AG04450 (cell line): ENCODE measurements at regions of chr22 and their contacts with region 1.

Region 1: GRCh38 chr22:20418211-20418788 is 19.3 kb downstream of the SCARF2 start:
- DNase-seq: peak; percentile 65
- H3K4me3 ChIP-seq: peak overlapping the region; percentile 56
- H3K27ac ChIP-seq: peak overlapping the region; percentile 57
- H3K27me3 ChIP-seq: no peaks in the 10 kb centered on the region
- CTCF ChIP-seq: peak; percentile 89

Region 2: DNA sequence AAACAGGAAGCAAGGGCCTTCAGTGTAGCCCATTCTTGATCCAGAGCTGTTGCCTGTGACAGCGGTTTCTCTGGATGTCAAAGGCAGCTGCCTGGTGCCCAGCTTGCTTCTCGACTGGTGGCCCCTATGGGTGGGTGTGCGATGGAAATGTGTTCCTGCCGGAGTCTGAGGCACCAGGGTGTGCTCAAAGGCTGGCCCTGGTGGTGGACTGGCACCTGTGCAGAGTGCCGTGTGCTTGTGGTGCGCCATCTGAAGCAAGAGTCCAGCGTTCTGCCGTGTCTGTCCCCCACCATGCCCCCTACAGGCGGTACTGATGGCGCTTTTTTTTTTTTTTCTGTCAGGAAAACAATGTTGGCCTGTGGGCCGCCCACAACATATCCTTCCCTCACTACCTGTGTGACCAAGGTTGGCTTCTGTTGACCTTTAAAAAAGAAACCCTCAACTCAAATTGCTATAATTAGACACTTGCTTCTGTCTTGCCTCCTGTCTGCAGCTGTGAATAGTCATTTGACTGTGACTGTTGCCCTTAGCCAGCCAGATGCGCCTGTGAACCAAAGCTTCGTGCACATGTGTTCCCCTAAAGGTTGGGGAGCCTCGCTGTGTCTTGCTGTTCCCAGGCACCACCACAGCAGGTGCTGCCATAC is 307.1 kb before region 1 on chr22:
- CTCF ChIA-PET with region 1: no interaction called
- POLR2A ChIA-PET with region 1: no interaction called
- DNase-seq: no peak
- H3K4me3 ChIP-seq: no peak overlapping the region
- H3K27ac ChIP-seq: no peak overlapping the region
- H3K27me3 ChIP-seq: no peaks in the 10 kb centered on the region
- CTCF ChIP-seq: peak; percentile 53

Region 3: GRCh38 chr22:20430720-20431510 is 12.6 kb after region 1 on chr22:
- CTCF ChIA-PET with region 1: interaction called, 35 read pairs
- POLR2A ChIA-PET with region 1: interaction called, 5 read pairs
- DNase-seq: no peak
- H3K4me3 ChIP-seq: no peak overlapping the region
- H3K27ac ChIP-seq: no peak overlapping the region
- H3K27me3 ChIP-seq: no peaks in the 10 kb centered on the region
- CTCF ChIP-seq: 0 out of 2 replicates have a peak, but pooled peaks have one; percentile 2

Region 4: GRCh38 chr22:20456064-20456721 is 37.9 kb after region 1 on chr22:
- CTCF ChIA-PET with region 1: interaction called, 155 read pairs
- POLR2A ChIA-PET with region 1: interaction called, 7 read pairs
- DNase-seq: peak; percentile 75
- H3K4me3 ChIP-seq: no peak overlapping the region
- H3K27ac ChIP-seq: no peak overlapping the region
- H3K27me3 ChIP-seq: no peaks in the 10 kb centered on the region
- CTCF ChIP-seq: peak; percentile 96

Region 5: DNA sequence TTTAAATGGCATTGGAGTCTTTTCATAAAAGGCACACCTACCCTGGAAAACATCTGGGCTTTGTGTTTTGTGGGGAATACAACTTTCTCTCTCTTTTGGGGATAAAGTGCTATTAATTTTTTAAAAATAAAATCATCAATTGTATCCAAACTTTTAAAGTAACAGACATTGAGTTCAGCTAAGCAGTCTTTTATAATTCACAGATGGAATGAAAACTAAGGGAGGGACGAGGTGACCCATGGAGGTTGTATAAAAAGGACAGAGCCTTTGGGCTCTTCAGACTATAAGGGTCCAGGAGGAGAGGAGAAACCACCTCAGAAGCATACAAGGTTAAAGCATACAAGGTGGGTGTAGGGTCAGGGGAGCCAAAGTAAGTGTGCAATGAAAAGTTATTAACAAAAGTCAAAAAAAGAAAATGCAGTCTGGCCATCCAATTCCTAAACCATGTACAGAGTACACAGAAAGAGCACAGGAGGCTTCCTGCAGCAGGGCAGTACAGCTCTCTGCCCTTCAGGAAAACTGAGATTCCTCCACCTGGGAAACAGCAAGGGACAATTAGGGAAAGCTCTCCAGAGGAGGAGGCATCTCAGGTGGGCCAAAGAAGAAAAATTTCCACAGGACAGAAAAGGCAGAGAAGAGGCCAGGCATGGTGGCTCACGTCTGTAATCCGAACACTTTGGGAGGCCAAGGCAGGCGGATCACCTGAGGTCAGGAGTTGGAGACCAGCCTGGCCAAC is 66.8 kb after region 1 on chr22:
- CTCF ChIA-PET with region 1: interaction called, 16 read pairs
- POLR2A ChIA-PET with region 1: no interaction called
- DNase-seq: no peak
- H3K4me3 ChIP-seq: no peak overlapping the region
- H3K27ac ChIP-seq: no peak overlapping the region
- H3K27me3 ChIP-seq: no peaks in the 10 kb centered on the region
- CTCF ChIP-seq: no peak